IMR-90 (cell line): ENCODE measurements at regions of chr10 and their contacts with region 1.

Region 1: DNA sequence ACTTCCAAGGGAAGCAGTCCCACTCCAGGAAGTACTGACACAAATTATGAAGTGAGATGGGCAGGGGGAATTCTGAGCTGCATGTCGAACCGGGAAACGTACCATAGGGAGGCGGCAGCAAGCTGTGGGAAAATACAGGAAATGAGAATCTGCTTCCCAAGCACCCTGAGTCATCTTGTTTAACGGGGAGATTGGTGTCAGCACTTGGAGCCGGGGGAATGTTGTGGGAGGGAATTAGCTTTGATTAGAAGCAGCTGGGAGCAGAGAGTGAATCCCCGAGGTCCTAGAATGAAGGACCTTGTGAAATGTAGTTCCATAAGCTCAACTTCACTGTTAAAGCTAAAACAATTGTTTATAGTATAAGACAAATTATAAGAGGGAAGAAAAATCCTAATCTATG is 141.4 kb upstream of the PRKCQ start:
- DNase-seq: peak; percentile 99
- ATAC-seq: peak; percentile 72
- H3K4me3 ChIP-seq: no peak overlapping the region
- H3K27ac ChIP-seq: peak overlapping the region; percentile 73
- H3K4me1 ChIP-seq: peaks cover 12% of the 10 kb centered on the region
- H3K27me3 ChIP-seq: no peaks in the 10 kb centered on the region
- CTCF ChIP-seq: peak; percentile 64
- POLR2A ChIP-seq: no peak; the same call in 1 of the 2 replicates
- RAD21 ChIP-seq: peak; percentile 79

Region 2: GRCh38 chr10:5976512-5977470 is 744.7 kb before region 1 on chr10:
- CTCF ChIA-PET with region 1: no interaction called
- POLR2A ChIA-PET with region 1: no interaction called
- dilution Hi-C with region 1: no loop called
- in situ Hi-C with region 1: no loop called
- intact Hi-C with region 1: no loop called
- DNase-seq: peak; percentile 47
- ATAC-seq: peak; percentile 60
- H3K4me3 ChIP-seq: peak overlapping the region; percentile 68
- H3K27ac ChIP-seq: peak overlapping the region; percentile 61
- H3K4me1 ChIP-seq: peaks cover 3% of the 10 kb centered on the region; the same call in 1 of the 2 replicates
- H3K27me3 ChIP-seq: no peaks in the 10 kb centered on the region
- CTCF ChIP-seq: no peak
- POLR2A ChIP-seq: no peak
- RAD21 ChIP-seq: no peak

Region 3: GRCh38 chr10:5987747-5988146 is 733.7 kb before region 1 on chr10:
- CTCF ChIA-PET with region 1: no interaction called
- POLR2A ChIA-PET with region 1: no interaction called
- dilution Hi-C with region 1: no loop called
- in situ Hi-C with region 1: no loop called
- intact Hi-C with region 1: no loop called
- DNase-seq: no peak
- ATAC-seq: no peak
- H3K4me3 ChIP-seq: no peak overlapping the region
- H3K27ac ChIP-seq: no peak overlapping the region
- H3K4me1 ChIP-seq: peaks cover 4% of the 10 kb centered on the region; the same call in 1 of the 2 replicates
- H3K27me3 ChIP-seq: peaks cover 4% of the 10 kb centered on the region
- CTCF ChIP-seq: no peak
- POLR2A ChIP-seq: no peak
- RAD21 ChIP-seq: no peak

Region 4: DNA sequence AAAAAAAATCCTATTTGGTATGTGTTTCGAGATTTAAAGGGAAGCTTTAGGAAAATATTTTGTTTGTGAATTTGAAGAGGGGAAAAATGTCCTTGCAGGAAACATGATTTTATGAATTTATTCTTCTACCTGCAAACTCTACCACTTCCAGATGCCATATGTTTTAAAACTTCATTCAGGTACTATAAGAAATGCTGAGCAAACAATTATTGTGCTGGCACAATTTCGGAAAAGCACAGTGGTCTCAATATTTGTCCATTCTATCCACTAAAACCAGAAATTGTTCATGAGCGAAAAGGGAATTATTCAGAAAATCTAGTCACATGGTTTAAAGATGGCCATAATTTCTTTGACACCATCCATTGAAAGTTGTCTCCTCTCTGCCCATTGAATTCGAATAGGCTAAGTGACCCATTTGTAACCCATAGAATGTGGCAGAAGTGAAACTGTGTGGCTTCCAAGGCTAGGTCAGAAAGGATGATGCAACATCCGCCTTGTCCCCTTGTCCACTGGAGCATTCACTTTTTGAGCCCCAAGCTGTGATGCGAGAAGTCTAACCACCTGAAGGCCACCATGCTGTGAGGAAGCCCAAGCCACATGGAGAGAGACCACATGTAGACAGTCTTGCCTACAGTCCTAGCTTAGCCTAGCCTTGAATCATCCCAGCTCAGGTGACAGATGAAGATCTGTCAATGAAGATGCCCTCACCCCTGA is 48.4 kb after region 1 on chr10:
- CTCF ChIA-PET with region 1: no interaction called
- POLR2A ChIA-PET with region 1: no interaction called
- dilution Hi-C with region 1: no loop called
- in situ Hi-C with region 1: no loop called
- intact Hi-C with region 1: loop called (anchors 2 kb)
- DNase-seq: no peak
- ATAC-seq: no peak
- H3K4me3 ChIP-seq: no peak overlapping the region
- H3K27ac ChIP-seq: peak overlapping the region; percentile 45
- H3K4me1 ChIP-seq: peaks cover 15% of the 10 kb centered on the region
- H3K27me3 ChIP-seq: no peaks in the 10 kb centered on the region
- CTCF ChIP-seq: no peak
- POLR2A ChIP-seq: no peak
- RAD21 ChIP-seq: no peak